Astrocyte of the cerebellum (primary cell): ENCODE measurements at regions of chr1 and their contacts with region 1.

Region 1: DNA sequence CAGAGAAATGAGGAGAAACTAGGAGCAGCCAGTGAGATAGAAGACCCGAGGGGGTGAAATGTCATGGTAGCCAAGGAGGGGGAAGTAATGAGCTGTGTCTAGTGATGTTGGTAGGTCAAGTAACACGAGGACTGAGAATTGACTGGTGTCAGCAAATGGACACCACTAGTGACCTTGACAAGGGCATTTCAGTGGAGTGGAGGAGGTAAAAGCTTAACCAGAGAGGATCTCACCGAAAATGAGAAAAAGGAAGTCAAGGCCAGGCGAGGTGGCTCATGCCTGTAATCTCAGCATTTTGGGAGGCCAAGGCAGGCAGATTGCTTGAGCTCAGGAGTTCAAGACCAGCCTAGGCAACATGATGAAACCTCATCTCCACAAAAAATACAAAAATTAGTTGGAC is 3.0 kb upstream of the ZYG11B start:
- DNase-seq: no peak
- H3K4me3 ChIP-seq: no peak overlapping the region
- CTCF ChIP-seq: no peak

Region 2: GRCh38 chr1:52792036-52792435 is 68.8 kb after region 1 on chr1:
- in situ Hi-C with region 1: loop called (anchors 5 kb)
- DNase-seq: no peak
- H3K4me3 ChIP-seq: no peak overlapping the region
- CTCF ChIP-seq: no peak